Activated T-helper 2 cell treated with anti-CD3 and anti-CD28 coated beads, Interferon-gamma antibody, Interleukin-2, Interleukin-4, amounts not matched to agents 10 μg/mL and 5 μg/mL and 100 μg/mL, durations not matched to agents 14 hours and 24 hours and 36 hours (primary cell): ENCODE measurements at regions of chr2 and their contacts with region 1.

Region 1: DNA sequence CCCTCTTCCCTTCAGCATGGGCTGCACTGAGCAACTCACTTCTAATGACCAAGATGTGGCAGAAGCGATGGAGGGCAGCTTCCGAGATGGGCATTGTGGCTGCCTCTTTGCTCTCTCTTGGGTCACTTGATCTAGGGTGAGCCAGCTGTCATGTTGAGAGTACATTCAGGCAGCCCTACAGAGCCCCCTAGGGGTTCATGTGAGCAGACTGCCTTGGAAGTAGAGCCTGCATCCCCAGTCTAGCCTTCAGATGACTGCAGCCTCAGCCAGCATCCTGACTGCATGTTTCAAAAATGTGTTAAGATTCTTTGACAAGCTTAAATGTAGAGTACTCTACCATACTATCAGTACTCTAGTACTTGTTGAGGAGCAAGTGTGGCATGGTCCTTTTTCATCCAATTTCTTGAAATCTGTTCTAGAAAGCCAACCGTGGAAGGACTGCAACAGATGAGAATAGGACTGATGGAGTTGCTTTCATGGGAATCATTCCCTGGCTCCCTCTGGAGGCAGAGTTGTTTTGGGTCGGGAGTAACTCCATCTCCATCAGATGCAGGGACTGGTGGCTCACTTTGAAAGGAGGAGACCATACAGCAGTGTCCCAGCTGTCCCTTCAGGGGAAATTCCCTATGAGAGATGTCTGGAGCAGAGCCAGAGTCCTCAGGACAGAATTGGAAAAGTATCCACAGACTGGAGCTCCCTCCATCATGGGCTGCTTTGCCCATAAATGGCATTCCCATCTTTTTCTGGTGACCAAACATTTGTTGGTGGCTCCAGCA is 144.1 kb downstream of the NCK2 start:
- DNase-seq: no peak
- H3K4me3 Mint-ChIP-seq: no peak overlapping the region
- H3K27ac Mint-ChIP-seq: no peak overlapping the region
- H3K4me1 Mint-ChIP-seq: peaks cover 48% of the 10 kb centered on the region
- H3K27me3 Mint-ChIP-seq: no peaks in the 10 kb centered on the region

Region 2: GRCh38 chr2:105822186-105822585 is 66.6 kb before region 1 on chr2:
- intact Hi-C with region 1: loop called (anchors 5 kb)
- DNase-seq: no peak
- H3K4me3 Mint-ChIP-seq: no peak overlapping the region
- H3K27ac Mint-ChIP-seq: peak overlapping the region; percentile 58
- H3K4me1 Mint-ChIP-seq: peaks cover 47% of the 10 kb centered on the region
- H3K27me3 Mint-ChIP-seq: no peaks in the 10 kb centered on the region